ENCODE measurements at regions of chrX and their contacts with region 1.

Region 1: DNA sequence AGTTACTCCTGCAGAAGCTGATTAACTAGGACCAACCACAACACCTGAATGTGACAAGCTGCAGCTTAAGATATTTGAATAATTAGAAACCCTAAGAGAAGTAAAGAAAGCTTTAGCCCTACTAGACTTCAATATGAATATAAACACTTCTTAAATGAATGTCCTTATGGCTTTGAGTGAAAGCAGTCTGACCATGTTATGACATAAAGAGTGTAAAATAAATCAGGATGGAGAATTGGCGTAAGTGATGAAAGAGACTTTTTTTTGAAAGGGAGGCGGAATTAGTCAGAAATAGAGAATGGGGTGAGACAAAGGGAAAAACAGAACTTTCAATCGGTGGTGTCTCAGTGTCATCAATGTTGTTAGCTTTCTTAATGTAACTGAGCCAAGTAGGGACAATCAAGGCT is 117.2 kb upstream of the MAGEB16 start:
- DNase-seq: no peak
- H3K4me3 ChIP-seq: no peak overlapping the region
- H3K27ac ChIP-seq: no peak overlapping the region
- H3K4me1 ChIP-seq: no peaks in the 10 kb centered on the region
- H3K27me3 ChIP-seq: no peaks in the 10 kb centered on the region
- CTCF ChIP-seq: no peak
- EP300 ChIP-seq: no peak
- POLR2A ChIP-seq: no peak

Region 2: GRCh38 chrX:35722128-35722527 is 41.2 kb after region 1 on chrX:
- in situ Hi-C with region 1: no loop called
- intact Hi-C with region 1: loop called (anchors 2 kb)
- DNase-seq: no peak
- H3K4me3 ChIP-seq: no peak overlapping the region
- H3K27ac ChIP-seq: no peak overlapping the region
- H3K4me1 ChIP-seq: no peaks in the 10 kb centered on the region
- H3K27me3 ChIP-seq: no peaks in the 10 kb centered on the region
- CTCF ChIP-seq: no peak
- EP300 ChIP-seq: no peak
- POLR2A ChIP-seq: no peak

Measured in transverse colon (tissue), 4 donors.